IMR-90 (cell line): ENCODE measurements at regions of chr7 and their contacts with region 1.

Region 1: DNA sequence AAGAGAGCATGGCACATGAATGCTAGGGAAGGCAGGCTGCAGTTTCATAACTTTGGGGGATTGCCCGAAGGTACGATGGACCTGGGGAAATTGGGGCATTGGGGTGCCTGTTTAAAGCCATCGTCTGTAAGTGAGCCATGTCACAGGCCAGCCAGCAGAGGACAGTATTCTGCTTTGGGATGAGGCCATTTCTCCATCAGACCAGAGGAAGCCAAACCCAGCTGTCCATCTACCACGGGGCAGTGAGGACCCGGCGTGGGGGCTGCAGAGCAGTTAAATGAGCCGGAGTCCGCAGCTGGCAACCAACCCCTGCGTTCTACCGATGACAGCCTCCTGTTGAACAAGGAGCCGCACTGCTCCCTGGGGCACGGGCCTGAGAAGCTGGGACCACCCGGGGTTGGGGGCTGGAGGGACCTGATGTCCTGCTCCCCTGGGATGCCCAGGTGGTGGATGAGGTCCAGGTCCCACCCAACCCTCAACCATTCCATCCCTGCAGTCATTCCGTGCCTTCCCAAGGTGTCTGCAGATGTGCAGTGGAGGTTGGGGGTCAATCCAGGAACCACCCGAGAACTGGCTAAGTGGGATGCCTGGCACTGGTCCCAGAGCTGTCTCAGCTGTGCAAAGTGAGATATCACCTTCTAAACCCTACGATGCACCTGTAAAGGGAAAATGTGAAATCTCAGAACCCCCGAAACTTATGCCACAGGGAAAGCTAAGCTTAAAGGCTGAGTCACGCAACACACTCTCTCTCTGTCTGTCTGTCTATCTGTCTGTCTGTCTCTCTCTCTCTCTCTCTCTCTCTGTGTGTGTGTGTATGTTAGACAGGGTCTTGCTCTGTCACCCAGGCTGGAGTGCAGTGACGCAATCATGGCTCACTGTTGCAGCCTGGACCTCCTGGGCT is 12.1 kb upstream of the RHBDD2 start:
- DNase-seq: peak; percentile 65
- ATAC-seq: peak; percentile 91
- H3K4me3 ChIP-seq: no peak overlapping the region
- H3K27ac ChIP-seq: no peak overlapping the region
- H3K4me1 ChIP-seq: peaks cover 10% of the 10 kb centered on the region
- H3K27me3 ChIP-seq: no peaks in the 10 kb centered on the region
- CTCF ChIP-seq: peak; percentile 92
- POLR2A ChIP-seq: no peak
- RAD21 ChIP-seq: peak; percentile 91

Region 2: GRCh38 chr7:75914730-75915585 is 48.2 kb after region 1 on chr7 and contains the start of gene POR:
- CTCF ChIA-PET with region 1: no interaction called
- POLR2A ChIA-PET with region 1: no interaction called
- dilution Hi-C with region 1: no loop called
- in situ Hi-C with region 1: no loop called
- intact Hi-C with region 1: loop called (anchors 2 kb)
- DNase-seq: peak; percentile 88
- ATAC-seq: peak; percentile 99
- H3K4me3 ChIP-seq: peak within 1 kb of the TSS; percentile 78
- H3K27ac ChIP-seq: peak within 1 kb of the TSS; percentile 86
- H3K4me1 ChIP-seq: peaks cover 2% of the 10 kb centered on the region
- H3K27me3 ChIP-seq: no peaks in the 10 kb centered on the region
- CTCF ChIP-seq: no peak
- POLR2A ChIP-seq: peak; percentile 99
- RAD21 ChIP-seq: peak; percentile 3; the same call in 1 of the 2 replicates
- total RNA-seq, gene POR: 25.3 and 25.5 TPM in 2 replicates

Region 3: GRCh38 chr7:76020031-76020714 is 153.4 kb after region 1 on chr7:
- CTCF ChIA-PET with region 1: interaction called, 13 read pairs
- POLR2A ChIA-PET with region 1: no interaction called
- dilution Hi-C with region 1: no loop called
- in situ Hi-C with region 1: loop called (anchors 5 kb)
- intact Hi-C with region 1: loop called (anchors 1 kb)
- DNase-seq: peak; percentile 54
- ATAC-seq: peak; percentile 80
- H3K4me3 ChIP-seq: no peak overlapping the region
- H3K27ac ChIP-seq: no peak overlapping the region
- H3K4me1 ChIP-seq: no peaks in the 10 kb centered on the region
- H3K27me3 ChIP-seq: no peaks in the 10 kb centered on the region
- CTCF ChIP-seq: peak; percentile 81
- POLR2A ChIP-seq: no peak
- RAD21 ChIP-seq: peak; percentile 90

Region 4: GRCh38 chr7:76149847-76150691 is 283.3 kb after region 1 on chr7:
- CTCF ChIA-PET with region 1: no interaction called
- POLR2A ChIA-PET with region 1: no interaction called
- dilution Hi-C with region 1: no loop called
- in situ Hi-C with region 1: loop called (anchors 25 kb)
- intact Hi-C with region 1: no loop called
- DNase-seq: no peak
- ATAC-seq: no peak
- H3K4me3 ChIP-seq: no peak overlapping the region
- H3K27ac ChIP-seq: no peak overlapping the region
- H3K4me1 ChIP-seq: no peaks in the 10 kb centered on the region
- H3K27me3 ChIP-seq: peaks cover 7% of the 10 kb centered on the region
- CTCF ChIP-seq: no peak
- POLR2A ChIP-seq: no peak
- RAD21 ChIP-seq: no peak